ENCODE measurements at regions of chr16 and their contacts with region 1.

Region 1: GRCh38 chr16:649624-650023 is 459 bp downstream of the WDR90 start:
- DNase-seq: no peak
- H3K4me3 ChIP-seq: peak overlapping the region; percentile 71
- H3K27ac ChIP-seq: peak overlapping the region in 1 of 2 donors; percentile 93
- H3K4me1 ChIP-seq: peaks cover 12% of the 10 kb centered on the region
- H3K27me3 ChIP-seq: no peaks in the 10 kb centered on the region
- CTCF ChIP-seq: no peak
- EP300 ChIP-seq: no peak
- POLR2A ChIP-seq: no peak

Region 2: GRCh38 chr16:361872-362701 is 287.5 kb before region 1 on chr16:
- intact Hi-C with region 1: no loop called
- DNase-seq: peak; percentile 61 to 78 (median 72)
- H3K4me3 ChIP-seq: no peak overlapping the region
- H3K27ac ChIP-seq: no peak overlapping the region
- H3K4me1 ChIP-seq: no peaks in the 10 kb centered on the region
- H3K27me3 ChIP-seq: no peaks in the 10 kb centered on the region
- CTCF ChIP-seq: peak in 2 of 3 donors; percentile 37 to 51
- EP300 ChIP-seq: no peak
- POLR2A ChIP-seq: no peak

Region 3: DNA sequence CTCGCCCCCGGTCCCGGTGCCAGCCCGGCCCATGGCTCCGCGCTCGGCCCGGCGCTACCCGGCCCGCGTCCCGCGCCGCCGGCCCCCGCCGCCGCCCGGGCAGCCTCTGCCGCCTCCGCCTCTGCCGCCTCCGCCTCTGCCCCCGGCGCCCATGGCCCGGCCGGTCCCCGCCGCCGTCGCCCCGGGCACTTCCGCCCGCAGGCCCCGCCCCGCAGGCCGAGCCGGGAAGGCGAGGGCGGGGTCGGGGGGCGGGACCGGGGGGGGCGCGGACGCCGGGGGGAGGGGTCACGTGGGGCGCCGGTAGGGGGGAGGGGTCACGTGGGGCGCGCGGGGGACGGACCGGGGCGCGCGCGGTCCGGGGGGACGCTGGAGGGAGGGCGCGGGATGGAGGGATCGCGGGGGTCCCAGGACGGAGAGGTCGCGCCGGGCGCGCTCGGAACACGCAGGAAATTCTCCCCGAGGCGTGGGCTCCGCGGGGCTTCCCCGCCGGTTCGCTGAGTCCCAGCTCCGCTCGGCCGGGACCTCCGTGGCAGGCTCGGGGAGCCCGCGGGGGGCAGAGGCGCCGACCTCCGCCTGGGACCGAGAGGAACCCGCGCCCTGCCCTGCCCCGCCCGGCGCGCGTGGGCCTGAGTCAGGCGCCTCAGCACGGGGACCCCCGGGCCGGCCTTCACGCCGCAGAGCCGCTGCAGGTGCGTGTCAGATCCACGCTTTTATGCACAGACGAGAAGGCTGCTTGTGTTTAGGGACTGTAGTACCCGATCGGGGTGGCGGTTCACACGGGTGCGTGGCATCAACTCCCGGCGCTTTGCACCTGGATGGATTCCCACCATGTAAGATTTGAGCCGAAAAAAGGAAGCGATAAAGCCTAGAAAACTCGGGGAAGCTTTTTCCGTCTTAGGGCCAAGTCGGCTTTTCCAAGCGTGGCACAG is 267.6 kb before region 1 on chr16 and contains the start of gene PGAP6:
- intact Hi-C with region 1: loop called in 1 of 4 experiments (anchors 10 kb)
- DNase-seq: peak; percentile 56 to 75 (median 70)
- H3K4me3 ChIP-seq: peak within 1 kb of the TSS; percentile 63
- H3K27ac ChIP-seq: peak within 1 kb of the TSS; percentile 30 to 33
- H3K4me1 ChIP-seq: peaks cover 4% of the 10 kb centered on the region
- H3K27me3 ChIP-seq: no peaks in the 10 kb centered on the region
- CTCF ChIP-seq: no peak
- EP300 ChIP-seq: no peak
- POLR2A ChIP-seq: no peak
- total RNA-seq, gene PGAP6: 13.0 to 39.8 (median 23.2) TPM

Region 4: DNA sequence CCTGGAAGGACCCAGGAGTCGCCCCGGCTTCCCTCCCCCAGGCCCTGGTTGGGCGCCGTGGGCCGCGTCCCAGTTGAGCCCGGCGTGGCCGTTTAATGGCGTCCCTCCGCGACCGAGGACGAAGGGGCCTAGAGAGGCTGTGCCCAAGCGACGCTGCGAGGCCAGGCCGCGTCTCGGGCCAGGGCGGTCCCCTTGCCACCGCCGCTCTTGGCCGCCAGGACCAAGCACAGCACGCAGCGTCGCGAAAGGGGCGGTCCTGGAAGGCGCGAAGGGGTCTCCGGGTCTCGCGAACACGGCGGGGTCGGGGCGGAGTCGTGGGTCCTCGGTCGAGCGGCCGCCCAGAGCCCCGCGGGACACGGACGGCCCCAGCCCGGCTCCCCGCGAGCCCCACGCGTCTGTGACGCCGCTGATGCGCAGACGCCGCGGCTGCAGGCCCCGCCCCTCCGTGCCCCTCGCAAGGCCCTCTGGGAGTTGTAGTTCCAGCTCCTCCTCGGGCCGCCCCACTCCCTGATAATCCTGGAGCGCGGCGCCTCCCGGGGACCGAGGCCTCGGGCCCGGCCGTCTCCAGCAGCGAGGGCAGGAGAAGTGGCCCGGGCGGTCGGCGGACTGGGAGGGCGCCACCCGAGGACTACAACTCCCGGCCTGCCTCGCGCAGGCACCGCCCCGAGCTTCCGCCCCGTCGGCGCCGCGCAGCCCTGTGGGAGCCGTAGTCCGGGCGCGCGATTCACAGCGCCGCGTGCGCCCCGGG is 122.4 kb before region 1 on chr16 and contains the start of gene CAPN15:
- intact Hi-C with region 1: no loop called
- DNase-seq: peak; percentile 89 to 93 (median 91)
- H3K4me3 ChIP-seq: peak within 1 kb of the TSS; percentile 59
- H3K27ac ChIP-seq: peak within 1 kb of the TSS; percentile 92 to 100
- H3K4me1 ChIP-seq: peaks cover 20% of the 10 kb centered on the region
- H3K27me3 ChIP-seq: no peaks in the 10 kb centered on the region
- CTCF ChIP-seq: peak in 1 of 3 donors; percentile 76
- EP300 ChIP-seq: no peak
- POLR2A ChIP-seq: peak; percentile 95
- total RNA-seq, gene CAPN15: 16.9 to 38.9 (median 30.5) TPM

Region 5: DNA sequence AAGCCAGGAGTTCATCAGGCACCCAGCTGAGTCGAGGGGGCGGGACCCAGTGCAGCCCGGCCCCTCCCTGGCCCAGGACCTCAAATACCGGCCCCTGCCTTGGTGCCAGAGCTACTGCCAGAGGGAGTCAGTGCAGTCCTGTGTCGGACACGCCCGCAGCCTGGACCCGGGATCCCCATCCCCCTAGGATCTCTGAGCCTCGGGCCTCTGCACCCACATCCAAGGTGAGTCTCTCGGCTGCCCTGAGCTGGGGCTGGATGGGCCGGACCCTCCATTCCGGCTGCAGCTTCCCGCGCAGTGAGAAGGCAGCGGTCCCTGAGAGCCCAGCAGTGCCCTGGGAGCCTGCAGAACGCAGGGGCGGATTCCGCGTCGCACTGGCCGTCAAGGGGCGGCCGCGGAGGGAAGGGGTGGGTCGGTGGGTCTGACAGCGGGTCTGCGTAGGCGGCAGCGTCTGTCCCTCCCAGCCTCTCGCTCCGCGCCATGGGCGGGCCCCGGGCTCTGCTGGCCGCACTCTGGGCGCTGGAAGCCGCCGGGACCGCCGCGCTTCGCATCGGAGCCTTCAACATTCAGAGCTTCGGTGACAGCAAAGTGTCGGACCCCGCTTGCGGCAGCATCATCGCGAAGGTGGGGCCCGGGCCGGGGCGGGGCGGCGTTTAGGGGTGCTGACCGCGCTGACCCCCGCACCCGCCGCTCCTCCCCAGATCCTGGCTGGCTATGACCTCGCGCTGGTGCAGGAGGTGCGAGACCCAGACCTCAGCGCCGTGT is 1586.9 kb after region 1 on chr16 and contains the start of gene DNASE1L2:
- intact Hi-C with region 1: no loop called
- DNase-seq: peak in 1 of 5 donors; percentile 20
- H3K4me3 ChIP-seq: no peak within 1 kb of the TSS
- H3K27ac ChIP-seq: no peak within 1 kb of the TSS
- H3K4me1 ChIP-seq: peaks cover 7% of the 10 kb centered on the region
- H3K27me3 ChIP-seq: no peaks in the 10 kb centered on the region
- CTCF ChIP-seq: no peak
- EP300 ChIP-seq: no peak
- POLR2A ChIP-seq: no peak
- total RNA-seq, gene DNASE1L2: 0.37 to 1.1 (median 0.75) TPM